Caco-2 (cell line): ENCODE measurements at regions of chr1 and their contacts with region 1.

Region 1: DNA sequence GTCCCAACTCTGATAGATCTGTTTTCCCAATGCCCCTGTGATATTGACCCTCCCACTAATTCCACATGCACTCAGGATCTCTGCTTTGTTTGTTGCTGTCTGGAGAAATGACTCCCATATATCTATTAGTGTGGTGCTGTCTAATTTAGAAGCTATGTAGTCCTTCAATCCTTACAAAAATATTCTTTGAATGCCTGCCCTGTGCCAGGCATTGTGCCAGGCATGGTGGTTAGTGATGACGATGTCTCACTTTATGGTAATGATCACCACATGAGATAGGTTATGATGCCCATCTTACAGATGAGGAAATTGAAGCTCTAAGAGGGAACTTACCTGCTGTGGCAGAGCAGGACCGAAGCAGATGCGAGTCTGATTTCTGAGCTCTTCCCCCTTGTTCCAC is 12.9 kb downstream of the MYOG start:
- DNase-seq: no peak
- H3K4me3 ChIP-seq: no peak overlapping the region
- H3K4me3 Mint-ChIP-seq: no peak overlapping the region
- H3K27ac Mint-ChIP-seq: peak overlapping the region; percentile 65
- H3K4me1 ChIP-seq: no peaks in the 10 kb centered on the region
- H3K4me1 Mint-ChIP-seq: no peaks in the 10 kb centered on the region
- H3K27me3 ChIP-seq: no peaks in the 10 kb centered on the region
- H3K27me3 Mint-ChIP-seq: no peaks in the 10 kb centered on the region
- CTCF ChIP-seq: no peak

Region 2: DNA sequence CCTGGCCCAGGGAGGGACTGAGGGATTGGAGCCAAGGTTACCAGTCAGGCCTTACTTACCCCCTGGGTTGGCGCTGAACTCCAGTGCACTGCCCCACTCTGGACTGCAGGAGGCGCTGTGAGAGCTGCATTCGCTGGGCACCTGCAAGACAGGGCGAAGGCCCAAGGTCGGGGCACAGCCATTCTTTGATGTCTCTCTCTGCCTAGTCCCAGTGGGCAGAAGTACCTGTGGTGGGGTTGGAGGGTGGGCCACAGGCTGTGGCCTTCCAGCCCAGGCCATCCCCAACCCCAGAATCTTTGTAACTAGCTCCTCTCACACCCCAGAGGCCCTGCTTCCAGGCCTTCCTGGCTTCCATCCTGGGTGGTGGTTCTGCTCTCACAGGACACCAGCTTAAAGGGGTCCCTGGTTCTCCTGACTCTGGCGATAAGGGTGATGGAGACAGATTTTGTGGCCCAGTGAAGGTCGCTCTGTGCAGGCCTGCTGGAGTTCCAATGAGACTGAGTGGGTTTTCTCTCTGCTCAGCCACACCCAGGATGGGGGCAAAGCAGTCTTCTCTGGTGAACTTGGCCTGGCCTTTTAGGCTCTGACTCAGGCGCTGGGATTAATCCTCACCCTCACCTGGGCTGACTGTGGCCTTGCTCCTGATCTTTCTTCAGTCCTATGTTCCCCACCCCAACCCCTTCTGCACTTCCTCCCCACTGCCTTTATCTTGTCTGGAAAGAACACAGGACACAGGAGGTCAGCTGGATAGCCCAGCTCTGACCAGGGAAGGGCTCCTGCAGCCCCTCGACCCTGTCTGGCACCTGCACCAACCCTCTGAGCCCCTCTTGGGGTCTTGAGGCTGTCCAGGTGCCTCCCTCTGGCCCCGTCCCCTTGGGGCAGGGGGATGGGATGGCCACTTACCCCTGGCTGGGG is 11.9 kb after region 1 on chr1:
- CTCF ChIA-PET with region 1: no interaction called
- POLR2A ChIA-PET with region 1: interaction called, 20 read pairs
- intact Hi-C with region 1: no loop called
- DNase-seq: no peak
- H3K4me3 ChIP-seq: no peak overlapping the region
- H3K4me3 Mint-ChIP-seq: no peak overlapping the region
- H3K27ac Mint-ChIP-seq: no peak overlapping the region
- H3K4me1 ChIP-seq: no peaks in the 10 kb centered on the region
- H3K4me1 Mint-ChIP-seq: no peaks in the 10 kb centered on the region
- H3K27me3 ChIP-seq: no peaks in the 10 kb centered on the region
- H3K27me3 Mint-ChIP-seq: no peaks in the 10 kb centered on the region
- CTCF ChIP-seq: peak; percentile 21 to 44